ENCODE measurements at regions of chr1 and their contacts with region 1.

Region 1: DNA sequence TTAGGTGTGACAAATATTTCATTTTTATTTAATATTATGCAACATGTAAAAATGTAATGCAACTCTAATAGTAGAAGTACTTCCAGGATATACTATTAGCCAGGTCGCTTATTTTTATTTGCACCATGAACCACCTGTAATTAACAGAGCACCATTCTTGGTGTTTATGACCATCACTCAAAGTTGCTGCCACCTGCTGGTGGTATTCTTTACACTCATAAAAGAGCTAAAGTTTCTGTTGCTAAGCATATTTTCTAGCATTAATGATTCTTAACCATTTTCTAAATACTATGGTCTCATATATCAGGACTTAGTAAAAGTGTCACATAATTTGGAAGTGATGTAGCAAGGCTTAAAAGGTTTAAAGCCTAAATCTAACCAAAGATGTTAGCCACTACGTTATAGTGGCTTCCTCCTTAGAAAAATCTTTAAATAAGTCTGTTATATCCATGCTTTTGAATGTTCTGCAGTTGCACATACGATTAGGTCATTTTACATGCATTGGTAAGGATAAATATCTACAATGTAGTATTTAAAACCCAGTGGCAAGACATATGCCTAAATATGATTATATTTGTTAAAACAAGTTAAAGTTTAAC is 244.5 kb downstream of the NEGR1 start:
- DNase-seq: peak; percentile 23 to 35
- H3K4me3 ChIP-seq: no peak overlapping the region
- H3K4me3 Mint-ChIP-seq: no peak overlapping the region
- H3K27ac Mint-ChIP-seq: no peak overlapping the region
- H3K4me1 ChIP-seq: no peaks in the 10 kb centered on the region
- H3K4me1 Mint-ChIP-seq: no peaks in the 10 kb centered on the region
- H3K27me3 ChIP-seq: no peaks in the 10 kb centered on the region
- H3K27me3 Mint-ChIP-seq: peaks cover 3% of the 10 kb centered on the region
- CTCF ChIP-seq: peak; percentile 43 to 44

Region 2: GRCh38 chr1:71093938-71094337 is 943.9 kb before region 1 on chr1:
- CTCF ChIA-PET with region 1: no interaction called
- POLR2A ChIA-PET with region 1: no interaction called
- intact Hi-C with region 1: loop called (anchors 5 kb)
- DNase-seq: no peak
- H3K4me3 ChIP-seq: no peak overlapping the region
- H3K4me3 Mint-ChIP-seq: no peak overlapping the region
- H3K27ac Mint-ChIP-seq: no peak overlapping the region
- H3K4me1 ChIP-seq: no peaks in the 10 kb centered on the region
- H3K4me1 Mint-ChIP-seq: no peaks in the 10 kb centered on the region
- H3K27me3 ChIP-seq: no peaks in the 10 kb centered on the region
- H3K27me3 Mint-ChIP-seq: no peaks in the 10 kb centered on the region
- CTCF ChIP-seq: peak in 1 of 2 experiments; percentile 4

Region 3: GRCh38 chr1:71196685-71197084 is 841.2 kb before region 1 on chr1:
- CTCF ChIA-PET with region 1: no interaction called
- POLR2A ChIA-PET with region 1: no interaction called
- intact Hi-C with region 1: loop called (anchors 10 kb)
- DNase-seq: no peak
- H3K4me3 ChIP-seq: no peak overlapping the region
- H3K4me3 Mint-ChIP-seq: no peak overlapping the region
- H3K27ac Mint-ChIP-seq: no peak overlapping the region
- H3K4me1 ChIP-seq: no peaks in the 10 kb centered on the region
- H3K4me1 Mint-ChIP-seq: no peaks in the 10 kb centered on the region
- H3K27me3 ChIP-seq: no peaks in the 10 kb centered on the region
- H3K27me3 Mint-ChIP-seq: no peaks in the 10 kb centered on the region
- CTCF ChIP-seq: no peak

Region 4: GRCh38 chr1:71587961-71588360 is 449.9 kb before region 1 on chr1:
- CTCF ChIA-PET with region 1: no interaction called
- POLR2A ChIA-PET with region 1: no interaction called
- intact Hi-C with region 1: loop called (anchors 1 kb)
- DNase-seq: no peak
- H3K4me3 ChIP-seq: no peak overlapping the region
- H3K4me3 Mint-ChIP-seq: no peak overlapping the region
- H3K27ac Mint-ChIP-seq: no peak overlapping the region
- H3K4me1 ChIP-seq: no peaks in the 10 kb centered on the region
- H3K4me1 Mint-ChIP-seq: no peaks in the 10 kb centered on the region
- H3K27me3 ChIP-seq: no peaks in the 10 kb centered on the region
- H3K27me3 Mint-ChIP-seq: no peaks in the 10 kb centered on the region
- CTCF ChIP-seq: no peak

Region 5: GRCh38 chr1:72221811-72222210 is 184.0 kb after region 1 on chr1:
- CTCF ChIA-PET with region 1: no interaction called
- POLR2A ChIA-PET with region 1: no interaction called
- intact Hi-C with region 1: no loop called
- DNase-seq: no peak
- H3K4me3 ChIP-seq: no peak overlapping the region
- H3K4me3 Mint-ChIP-seq: no peak overlapping the region
- H3K27ac Mint-ChIP-seq: no peak overlapping the region
- H3K4me1 ChIP-seq: no peaks in the 10 kb centered on the region
- H3K4me1 Mint-ChIP-seq: no peaks in the 10 kb centered on the region
- H3K27me3 ChIP-seq: no peaks in the 10 kb centered on the region
- H3K27me3 Mint-ChIP-seq: no peaks in the 10 kb centered on the region
- CTCF ChIP-seq: no peak

Measured in Caco-2 (cell line).